Ovary (tissue), 10 donors: ENCODE measurements at regions of chr9 and their contacts with region 1.

Region 1: DNA sequence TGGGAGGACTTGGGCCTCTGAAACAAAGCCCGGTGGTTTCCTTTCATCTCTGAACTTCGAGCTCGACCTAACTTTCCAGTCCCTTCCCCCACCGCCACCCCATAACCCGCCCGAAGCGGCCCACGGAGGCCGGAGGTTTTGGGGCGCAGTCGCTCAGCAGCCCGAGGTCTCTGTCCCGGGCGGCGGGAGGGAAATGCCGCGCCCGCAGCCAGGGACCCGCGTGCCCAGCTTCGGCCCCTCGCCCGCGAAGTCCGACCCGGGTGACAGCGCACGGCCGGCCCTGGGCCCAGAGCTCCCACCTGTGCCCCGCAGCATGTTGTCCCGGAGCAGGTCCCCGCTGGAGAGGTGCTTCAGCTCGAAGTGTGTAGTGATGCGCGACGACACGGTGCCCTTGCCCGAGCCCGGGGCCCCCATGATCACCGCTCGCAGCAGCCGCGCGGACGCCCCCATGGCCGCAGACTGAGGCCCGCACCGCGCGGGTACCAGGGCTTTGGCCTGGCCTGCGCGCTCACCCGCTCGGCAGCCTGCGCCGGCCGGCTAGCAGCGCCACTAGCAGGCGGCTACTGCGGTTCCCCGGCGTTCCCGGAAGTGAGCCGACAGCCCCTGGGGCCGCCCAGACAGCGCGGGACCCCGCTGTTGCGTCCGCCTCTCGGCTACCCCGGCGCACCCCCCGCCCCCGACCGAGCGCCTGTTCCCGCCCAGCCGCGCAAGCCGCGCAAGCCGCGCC is at the start of gene AK3:
- DNase-seq: peak; percentile 89 to 95 (median 93)
- H3K4me3 ChIP-seq: peak within 1 kb of the TSS; percentile 74
- H3K27ac ChIP-seq: peak within 1 kb of the TSS; percentile 86 to 87
- H3K4me1 ChIP-seq: peaks cover 10% of the 10 kb centered on the region
- H3K27me3 ChIP-seq: no peaks in the 10 kb centered on the region
- CTCF ChIP-seq: peak in 2 of 3 donors; percentile 23 to 50
- EP300 ChIP-seq: no peak
- POLR2A ChIP-seq: peak; percentile 80
- total RNA-seq, gene AK3: 54.8 to 69.4 (median 59.5) TPM

Region 2: DNA sequence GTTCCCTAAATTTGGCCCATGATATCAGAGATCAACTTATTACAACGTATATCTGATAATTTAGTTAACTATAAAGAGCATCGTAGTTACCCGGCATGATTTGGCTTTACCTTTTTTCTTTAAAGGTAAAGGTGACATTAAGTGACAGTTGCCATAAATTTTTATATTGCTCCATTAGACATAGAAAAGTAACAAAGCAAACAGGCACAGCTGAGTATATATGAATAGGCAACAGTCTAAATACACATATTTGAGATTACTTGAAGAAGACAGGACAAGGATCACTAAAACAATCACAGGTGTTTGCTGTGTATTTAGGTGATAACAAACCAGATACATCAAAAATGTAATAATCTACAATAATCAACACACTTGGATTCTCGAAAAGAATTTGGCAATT is 1249.8 kb before region 1 on chr9:
- intact Hi-C with region 1: no loop called
- DNase-seq: no peak
- H3K4me3 ChIP-seq: no peak overlapping the region
- H3K27ac ChIP-seq: no peak overlapping the region
- H3K4me1 ChIP-seq: no peaks in the 10 kb centered on the region
- H3K27me3 ChIP-seq: no peaks in the 10 kb centered on the region
- CTCF ChIP-seq: no peak
- EP300 ChIP-seq: no peak
- POLR2A ChIP-seq: no peak

Region 3: GRCh38 chr9:4662108-4662988 is 78.5 kb before region 1 on chr9 and contains the start of gene PLPP6:
- intact Hi-C with region 1: loop called in 3 of 4 experiments (anchors 2 to 10 kb)
- DNase-seq: peak; percentile 86 to 90 (median 88)
- H3K4me3 ChIP-seq: peak within 1 kb of the TSS; percentile 84
- H3K27ac ChIP-seq: peak within 1 kb of the TSS; percentile 15 to 49
- H3K4me1 ChIP-seq: peaks cover 6% of the 10 kb centered on the region
- H3K27me3 ChIP-seq: no peaks in the 10 kb centered on the region
- CTCF ChIP-seq: peak; percentile 46 to 58 (median 55)
- EP300 ChIP-seq: no peak
- POLR2A ChIP-seq: peak; percentile 33
- total RNA-seq, gene PLPP6: 4.6 to 10.0 (median 5.2) TPM

Region 4: DNA sequence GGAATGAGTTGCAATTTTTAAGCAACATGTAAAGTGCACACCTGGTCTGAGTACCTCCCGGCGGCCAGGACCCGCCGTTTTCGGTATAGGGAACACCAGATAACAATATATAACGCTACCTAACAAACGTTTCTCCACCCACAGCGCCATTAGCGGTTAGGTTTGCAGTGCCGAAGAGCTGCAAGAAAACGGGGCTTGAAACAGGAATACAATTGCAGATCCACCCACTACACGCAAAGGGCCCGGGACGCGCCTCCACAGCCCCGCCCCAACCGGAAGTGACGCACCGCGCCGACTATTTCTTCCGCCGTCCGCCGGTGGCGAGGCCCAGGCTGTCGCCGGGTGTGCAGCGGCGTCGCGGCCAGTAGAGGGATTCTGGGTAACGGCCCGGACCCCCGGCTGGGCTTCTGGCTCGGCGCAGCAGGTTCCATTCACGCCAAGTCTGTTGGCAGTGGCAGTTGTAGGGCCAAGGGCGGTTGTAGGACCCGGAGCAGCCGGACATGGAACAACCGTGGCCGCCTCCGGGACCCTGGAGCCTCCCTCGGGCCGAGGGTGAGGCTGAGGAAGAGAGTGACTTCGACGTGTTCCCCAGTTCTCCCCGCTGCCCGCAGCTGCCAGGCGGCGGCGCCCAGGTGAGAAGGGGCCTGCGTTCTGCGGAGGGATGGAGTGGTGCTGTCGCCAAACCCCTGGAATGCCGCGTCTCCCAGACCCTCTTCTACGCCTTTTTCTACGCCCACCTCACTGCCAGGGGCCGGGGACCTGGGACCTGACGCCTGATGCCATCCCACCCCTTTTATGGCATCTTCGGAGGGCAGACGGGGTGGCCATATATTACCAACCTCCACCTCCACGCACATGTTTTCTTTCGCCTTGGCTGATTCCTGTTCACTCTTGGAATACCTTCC is 61.3 kb before region 1 on chr9 and contains the start of gene CDC37L1:
- intact Hi-C with region 1: loop called in 2 of 4 experiments (anchors 5 kb)
- DNase-seq: peak; percentile 99
- H3K4me3 ChIP-seq: peak within 1 kb of the TSS; percentile 59
- H3K27ac ChIP-seq: peak within 1 kb of the TSS; percentile 90 to 91
- H3K4me1 ChIP-seq: peaks cover 4% of the 10 kb centered on the region
- H3K27me3 ChIP-seq: no peaks in the 10 kb centered on the region
- CTCF ChIP-seq: peak; percentile 55 to 86 (median 85)
- EP300 ChIP-seq: no peak
- POLR2A ChIP-seq: peak; percentile 98
- total RNA-seq, gene CDC37L1: 19.6 to 24.2 (median 21.8) TPM

Region 5: DNA sequence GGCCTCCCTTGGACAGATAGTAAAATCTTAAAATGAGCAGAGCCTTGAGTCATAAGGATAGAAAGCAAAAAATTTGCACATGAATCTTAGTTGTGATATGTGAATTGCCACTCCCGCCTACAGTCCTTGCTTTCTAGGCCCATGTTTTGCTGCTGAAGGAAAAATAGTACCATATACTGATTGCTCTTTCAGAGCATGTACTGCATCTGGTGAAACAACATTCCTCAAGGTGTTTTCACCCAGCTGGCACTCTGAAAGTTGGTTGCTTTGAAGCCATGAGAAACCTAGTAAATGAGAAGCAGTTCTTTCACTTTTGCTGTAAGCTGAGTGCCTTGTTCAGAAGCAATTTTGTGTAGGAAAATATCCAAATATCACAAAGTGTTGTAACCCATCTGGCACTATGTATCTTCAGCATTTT is 51.1 kb before region 1 on chr9:
- intact Hi-C with region 1: loop called in 1 of 4 experiments (anchors 5 kb)
- DNase-seq: no peak
- H3K4me3 ChIP-seq: no peak overlapping the region
- H3K27ac ChIP-seq: no peak overlapping the region
- H3K4me1 ChIP-seq: peaks cover 16% of the 10 kb centered on the region
- H3K27me3 ChIP-seq: no peaks in the 10 kb centered on the region
- CTCF ChIP-seq: no peak
- EP300 ChIP-seq: no peak
- POLR2A ChIP-seq: no peak

Region 6: DNA sequence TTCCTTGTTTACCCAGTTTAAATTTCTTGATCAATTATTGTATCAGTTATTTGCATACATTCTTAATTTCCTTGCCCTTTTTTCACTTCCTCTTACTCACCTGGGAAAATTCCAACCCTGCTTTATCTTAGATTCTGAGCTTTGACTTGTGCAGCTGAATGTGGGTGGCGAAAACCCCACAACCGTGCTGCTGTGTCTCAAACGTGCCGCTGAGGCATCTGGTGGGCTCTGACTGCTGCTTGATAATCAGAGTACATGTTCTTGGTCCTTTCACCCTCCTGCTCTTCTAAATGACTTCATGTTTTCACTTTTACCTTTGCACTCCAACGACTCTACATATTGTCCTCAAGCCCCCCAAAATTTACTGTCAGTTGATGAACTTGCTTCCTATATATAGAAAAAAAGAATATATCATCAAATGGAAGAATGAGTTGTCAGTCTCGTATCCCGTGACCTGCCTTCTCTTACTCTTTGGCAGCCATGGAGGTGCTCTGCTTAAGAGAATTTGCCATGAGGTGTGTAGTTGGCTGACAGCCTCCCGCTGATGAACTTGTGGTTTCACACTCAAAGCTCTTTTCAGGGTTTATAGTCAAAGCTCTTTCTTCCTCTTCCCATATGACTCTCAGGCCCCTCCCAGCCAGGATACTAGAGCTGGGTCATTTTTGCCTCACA is 230.3 kb after region 1 on chr9:
- intact Hi-C with region 1: no loop called
- DNase-seq: no peak
- H3K4me3 ChIP-seq: no peak overlapping the region
- H3K27ac ChIP-seq: no peak overlapping the region
- H3K4me1 ChIP-seq: no peaks in the 10 kb centered on the region
- H3K27me3 ChIP-seq: no peaks in the 10 kb centered on the region
- CTCF ChIP-seq: no peak
- EP300 ChIP-seq: no peak
- POLR2A ChIP-seq: no peak

Region 7: DNA sequence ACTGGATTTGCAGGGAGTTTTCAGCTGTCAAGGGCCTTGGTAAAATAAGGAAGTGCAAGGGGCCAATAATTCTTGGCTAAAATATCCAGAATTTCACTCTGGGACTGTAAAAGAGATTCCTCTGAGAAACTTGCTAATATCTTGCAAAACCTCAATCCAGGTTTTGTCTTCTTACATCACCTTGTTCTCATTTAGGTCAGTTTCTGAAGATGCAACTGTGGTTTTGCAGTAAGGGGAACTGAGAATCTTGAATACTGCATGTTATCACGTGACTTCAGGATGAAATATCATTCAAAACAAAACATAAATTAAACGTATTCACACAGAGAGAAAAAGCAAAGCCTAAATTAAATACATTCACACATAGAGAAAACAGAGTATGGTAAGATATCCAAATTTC is 853.1 kb after region 1 on chr9:
- intact Hi-C with region 1: loop called in 1 of 4 experiments (anchors 10 kb)
- DNase-seq: no peak
- H3K4me3 ChIP-seq: no peak overlapping the region
- H3K27ac ChIP-seq: no peak overlapping the region
- H3K4me1 ChIP-seq: no peaks in the 10 kb centered on the region
- H3K27me3 ChIP-seq: no peaks in the 10 kb centered on the region
- CTCF ChIP-seq: no peak
- EP300 ChIP-seq: no peak
- POLR2A ChIP-seq: no peak